GM12878 (cell line): ENCODE measurements at regions of chr14 and their contacts with region 1.

Region 1: DNA sequence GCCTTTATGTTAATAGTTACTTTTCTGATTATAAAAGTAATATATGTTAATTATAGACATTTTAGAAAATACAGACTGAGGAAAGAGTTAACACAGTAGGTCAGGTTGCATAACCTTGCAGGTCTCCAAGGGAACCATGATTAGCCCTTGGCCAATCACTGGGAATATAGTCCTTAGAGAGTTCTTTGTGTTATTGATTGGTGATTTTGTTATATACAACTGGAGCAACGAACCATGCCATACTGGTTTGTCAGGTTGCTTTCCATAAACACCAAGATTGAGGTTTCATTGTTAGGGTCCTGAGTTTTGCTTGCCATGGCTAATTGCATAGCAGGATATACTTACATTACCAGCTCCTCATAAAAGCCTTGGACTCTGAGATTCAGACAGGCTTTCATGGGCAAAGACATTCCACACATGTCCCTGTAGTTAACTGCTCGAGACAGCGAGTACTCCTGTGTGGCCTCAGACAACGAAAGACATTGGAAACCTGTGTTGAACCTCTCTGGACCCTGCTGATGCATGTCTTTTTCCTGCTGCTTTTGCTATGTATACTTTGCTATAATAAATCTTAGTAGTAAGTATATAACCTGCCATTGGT is 33.7 kb downstream of the MAPK1IP1L start:
- DNase-seq: no peak
- ATAC-seq: no peak
- H3K4me3 ChIP-seq: no peak overlapping the region
- H3K27ac ChIP-seq: no peak overlapping the region
- H3K4me1 ChIP-seq: 0 out of 2 replicates have a peak, but pooled peaks cover under 1% of the 10 kb centered on the region
- H3K27me3 ChIP-seq: no peaks in the 10 kb centered on the region
- CTCF ChIP-seq: no peak
- EP300 ChIP-seq: no peak
- POLR2A ChIP-seq: no peak
- RAD21 ChIP-seq: no peak

Region 2: DNA sequence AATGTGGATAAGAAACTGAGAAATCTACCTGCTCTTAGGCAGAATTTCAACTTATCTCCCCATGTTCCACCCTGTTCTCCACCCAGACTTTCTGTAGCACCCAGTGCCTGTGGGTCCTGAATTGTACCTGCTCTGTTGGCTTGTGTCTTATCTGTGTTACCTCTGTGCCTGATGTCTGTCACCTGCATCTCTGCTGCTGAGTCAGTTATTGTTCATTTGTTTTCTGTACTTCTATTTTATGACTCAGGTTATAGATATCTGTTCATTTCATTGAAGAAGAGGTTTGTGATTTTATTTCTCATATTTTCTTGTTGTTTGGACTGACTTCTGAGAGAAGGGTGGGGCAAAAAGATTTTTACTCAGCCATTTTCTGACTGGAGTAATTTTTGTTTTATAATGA is 46.5 kb before region 1 on chr14:
- CTCF ChIA-PET with region 1: no interaction called
- POLR2A ChIA-PET with region 1: no interaction called
- RAD21 ChIA-PET with region 1: no interaction called
- SMC1A ChIA-PET with region 1: no interaction called
- in situ Hi-C with region 1: no loop called
- intact Hi-C with region 1: no loop called
- DNase-seq: no peak
- ATAC-seq: peak; percentile 19; the same call in 1 of the 3 replicates
- H3K4me3 ChIP-seq: no peak overlapping the region
- H3K27ac ChIP-seq: no peak overlapping the region
- H3K4me1 ChIP-seq: no peaks in the 10 kb centered on the region
- H3K27me3 ChIP-seq: no peaks in the 10 kb centered on the region
- CTCF ChIP-seq: no peak
- EP300 ChIP-seq: no peak
- POLR2A ChIP-seq: no peak
- RAD21 ChIP-seq: no peak

Region 3: GRCh38 chr14:55071870-55072640 is 13.1 kb before region 1 on chr14:
- CTCF ChIA-PET with region 1: interaction called, 49 read pairs
- POLR2A ChIA-PET with region 1: interaction called, 3 read pairs
- RAD21 ChIA-PET with region 1: interaction called, 7 read pairs
- SMC1A ChIA-PET with region 1: interaction called, 32 read pairs
- in situ Hi-C with region 1: no loop called
- intact Hi-C with region 1: no loop called
- DNase-seq: peak; percentile 92
- ATAC-seq: peak; percentile 76
- H3K4me3 ChIP-seq: 0 out of 2 replicates have a peak overlapping the region, but pooled peaks have one; percentile 28
- H3K27ac ChIP-seq: peak overlapping the region; percentile 82
- H3K4me1 ChIP-seq: peaks cover 54% of the 10 kb centered on the region
- H3K27me3 ChIP-seq: no peaks in the 10 kb centered on the region
- CTCF ChIP-seq: no peak
- EP300 ChIP-seq: peak in 1 of 2 experiments; percentile 51; a peak in 2 of 4 replicates
- POLR2A ChIP-seq: peak; percentile 50; the same call in 1 of the 2 replicates
- RAD21 ChIP-seq: no peak

Region 4: GRCh38 chr14:55129428-55130195 is 44.5 kb after region 1 on chr14:
- CTCF ChIA-PET with region 1: interaction called, 10 read pairs
- POLR2A ChIA-PET with region 1: no interaction called
- RAD21 ChIA-PET with region 1: interaction called, 4 read pairs
- SMC1A ChIA-PET with region 1: interaction called, 7 read pairs
- in situ Hi-C with region 1: no loop called
- intact Hi-C with region 1: loop called (anchors 2 kb)
- DNase-seq: no peak
- ATAC-seq: peak; percentile 83
- H3K4me3 ChIP-seq: peak overlapping the region; percentile 73
- H3K27ac ChIP-seq: 0 out of 2 replicates have a peak overlapping the region, but pooled peaks have one; percentile 24
- H3K4me1 ChIP-seq: peaks cover 6% of the 10 kb centered on the region
- H3K27me3 ChIP-seq: no peaks in the 10 kb centered on the region
- CTCF ChIP-seq: no peak
- EP300 ChIP-seq: no peak
- POLR2A ChIP-seq: peak; percentile 71
- RAD21 ChIP-seq: no peak

Region 5: DNA sequence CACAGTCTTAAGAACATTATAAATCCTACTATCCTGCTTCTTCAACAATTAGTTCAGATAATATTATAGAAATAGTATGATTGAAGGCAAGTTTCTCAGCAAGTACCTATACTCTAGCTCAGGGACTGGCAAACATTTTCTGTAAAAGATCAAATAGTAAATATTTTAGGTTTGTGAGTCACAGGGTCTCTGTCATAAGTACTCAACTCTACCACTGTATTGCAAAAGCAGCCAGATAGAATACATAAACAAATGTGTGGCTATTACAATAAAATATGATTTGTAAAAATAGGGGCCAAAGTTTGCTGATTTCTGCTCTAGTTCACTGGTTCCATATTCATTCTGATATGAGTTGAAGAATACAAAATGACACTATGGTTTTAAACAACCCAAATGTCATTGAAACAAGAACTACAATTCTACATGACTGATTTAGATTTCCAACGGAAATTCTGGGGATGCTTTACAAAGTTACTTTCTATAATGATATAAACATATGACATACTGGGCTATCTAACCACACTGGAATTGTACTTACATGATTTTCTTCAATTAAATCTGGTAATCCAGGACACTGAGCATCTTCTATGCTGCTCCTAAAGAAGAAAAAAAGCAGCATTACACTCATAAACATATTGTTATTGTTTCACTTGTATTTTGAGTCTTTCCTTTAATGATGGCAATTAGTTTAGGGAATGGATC is 67.0 kb after region 1 on chr14:
- CTCF ChIA-PET with region 1: interaction called, 16 read pairs
- POLR2A ChIA-PET with region 1: no interaction called
- RAD21 ChIA-PET with region 1: interaction called, 95 read pairs
- SMC1A ChIA-PET with region 1: interaction called, 93 read pairs
- in situ Hi-C with region 1: loop called (anchors 5 kb)
- intact Hi-C with region 1: no loop called
- DNase-seq: no peak
- ATAC-seq: no peak
- H3K4me3 ChIP-seq: no peak overlapping the region
- H3K27ac ChIP-seq: no peak overlapping the region
- H3K4me1 ChIP-seq: no peaks in the 10 kb centered on the region
- H3K27me3 ChIP-seq: no peaks in the 10 kb centered on the region
- CTCF ChIP-seq: no peak
- EP300 ChIP-seq: no peak
- POLR2A ChIP-seq: no peak
- RAD21 ChIP-seq: no peak